ENCODE measurements at regions of chr9 and their contacts with region 1.

Region 1: GRCh38 chr9:109186857-109187256 is 19.8 kb upstream of the FRRS1L start:
- DNase-seq: no peak
- H3K4me3 ChIP-seq: no peak overlapping the region
- H3K27ac ChIP-seq: no peak overlapping the region
- H3K4me1 ChIP-seq: no peaks in the 10 kb centered on the region
- H3K27me3 ChIP-seq: no peaks in the 10 kb centered on the region
- CTCF ChIP-seq: no peak
- POLR2A ChIP-seq: no peak

Region 2: DNA sequence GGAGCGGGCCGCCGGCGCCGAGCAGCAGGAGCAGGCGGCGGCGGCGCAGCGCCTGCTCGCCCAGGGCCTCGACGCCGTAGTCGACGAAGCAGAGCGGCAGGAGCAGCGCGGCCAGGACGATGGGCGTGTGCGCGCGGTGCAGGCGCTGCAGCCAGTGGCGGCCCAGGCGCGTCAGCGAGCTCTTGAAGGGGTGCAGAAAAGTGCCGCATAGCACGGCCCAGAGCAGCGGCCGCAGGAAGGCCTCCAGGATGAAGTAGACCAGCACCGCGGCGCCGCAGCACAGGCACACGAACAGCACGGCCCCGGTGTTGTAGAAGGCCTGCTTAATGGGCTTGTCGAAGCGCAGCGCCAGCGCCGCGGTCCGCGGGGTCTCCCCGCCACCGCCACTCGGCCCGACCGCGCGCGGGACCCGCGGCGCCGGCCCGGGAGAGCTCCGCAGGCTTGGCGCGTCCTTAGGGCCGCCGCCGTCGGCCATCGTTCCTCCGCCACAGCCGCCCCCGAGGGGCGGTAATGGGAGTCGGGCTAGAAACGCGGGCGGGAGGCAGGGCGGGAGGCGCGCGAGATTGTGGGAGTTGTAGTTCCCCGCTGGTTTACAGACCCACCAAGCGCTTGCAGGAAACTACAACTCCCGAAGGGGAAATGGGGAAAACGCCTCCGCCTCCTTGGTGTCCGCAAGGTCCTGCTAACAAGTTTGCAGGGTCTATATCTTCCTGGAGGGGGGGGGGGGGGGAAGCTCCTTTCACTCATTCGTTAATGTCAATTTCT is 67.2 kb before region 1 on chr9 and contains the start of gene TMEM245:
- intact Hi-C with region 1: no loop called
- DNase-seq: peak; percentile 98
- H3K4me3 ChIP-seq: peak within 1 kb of the TSS; percentile 67 to 83 (median 78)
- H3K27ac ChIP-seq: peak within 1 kb of the TSS; percentile 96 to 98 (median 97)
- H3K4me1 ChIP-seq: peaks cover 23 to 29% of the 10 kb centered on the region in 2 donors
- H3K27me3 ChIP-seq: no peaks in the 10 kb centered on the region
- CTCF ChIP-seq: peak in 1 of 6 experiments; percentile 12
- POLR2A ChIP-seq: peak; percentile 90 to 99
- total RNA-seq, gene TMEM245: 222 to 549 (median 318) TPM

Region 3: GRCh38 chr9:109238655-109239054 is 51.8 kb after region 1 on chr9:
- intact Hi-C with region 1: loop called (anchors 5 kb)
- DNase-seq: no peak
- H3K4me3 ChIP-seq: no peak overlapping the region
- H3K27ac ChIP-seq: no peak overlapping the region
- H3K4me1 ChIP-seq: peaks cover 12 to 14% of the 10 kb centered on the region in 2 donors
- H3K27me3 ChIP-seq: no peaks in the 10 kb centered on the region
- CTCF ChIP-seq: no peak
- POLR2A ChIP-seq: no peak

Region 4: DNA sequence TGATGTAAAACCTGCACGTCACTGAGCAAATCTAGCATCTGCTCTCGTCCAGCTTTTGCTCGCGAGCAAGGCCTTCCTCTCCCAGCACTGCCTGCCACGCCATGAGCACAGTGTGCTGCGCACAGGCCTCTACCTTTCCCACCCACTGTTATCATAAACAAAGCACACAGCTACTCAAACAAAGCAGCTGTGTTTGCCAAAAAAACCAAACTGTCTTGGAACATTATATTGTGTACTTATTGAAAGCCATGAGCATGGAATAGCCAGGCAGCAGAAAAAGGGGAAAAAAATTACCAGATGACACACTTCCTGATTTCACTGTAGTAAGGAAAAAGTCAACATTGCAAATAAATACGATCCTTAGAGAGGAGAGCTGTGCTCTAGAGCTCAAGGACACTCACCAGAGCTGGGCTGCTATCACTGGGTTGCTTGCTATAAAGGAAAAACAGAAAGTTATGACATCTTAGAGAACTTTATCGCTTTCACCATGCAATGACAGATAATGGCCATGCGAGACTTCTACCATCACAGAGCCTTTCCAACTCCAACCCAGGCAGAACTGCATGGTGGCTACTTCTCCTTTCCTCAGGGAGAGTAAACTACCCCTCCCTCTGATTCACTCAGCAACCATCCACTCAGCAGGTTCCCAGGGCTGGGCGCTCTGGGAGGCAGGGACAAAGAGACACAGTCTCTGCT is 64.4 kb after region 1 on chr9:
- intact Hi-C with region 1: no loop called
- DNase-seq: peak; percentile 63 to 76
- H3K4me3 ChIP-seq: no peak overlapping the region
- H3K27ac ChIP-seq: peak overlapping the region; percentile 76 to 90 (median 86)
- H3K4me1 ChIP-seq: peaks cover 52 to 69% of the 10 kb centered on the region in 2 donors
- H3K27me3 ChIP-seq: no peaks in the 10 kb centered on the region
- CTCF ChIP-seq: no peak
- POLR2A ChIP-seq: peak in 1 of 2 donors; percentile 38